MCF 10A (cell line): ENCODE measurements at regions of chr1 and their contacts with region 1.

Region 1: DNA sequence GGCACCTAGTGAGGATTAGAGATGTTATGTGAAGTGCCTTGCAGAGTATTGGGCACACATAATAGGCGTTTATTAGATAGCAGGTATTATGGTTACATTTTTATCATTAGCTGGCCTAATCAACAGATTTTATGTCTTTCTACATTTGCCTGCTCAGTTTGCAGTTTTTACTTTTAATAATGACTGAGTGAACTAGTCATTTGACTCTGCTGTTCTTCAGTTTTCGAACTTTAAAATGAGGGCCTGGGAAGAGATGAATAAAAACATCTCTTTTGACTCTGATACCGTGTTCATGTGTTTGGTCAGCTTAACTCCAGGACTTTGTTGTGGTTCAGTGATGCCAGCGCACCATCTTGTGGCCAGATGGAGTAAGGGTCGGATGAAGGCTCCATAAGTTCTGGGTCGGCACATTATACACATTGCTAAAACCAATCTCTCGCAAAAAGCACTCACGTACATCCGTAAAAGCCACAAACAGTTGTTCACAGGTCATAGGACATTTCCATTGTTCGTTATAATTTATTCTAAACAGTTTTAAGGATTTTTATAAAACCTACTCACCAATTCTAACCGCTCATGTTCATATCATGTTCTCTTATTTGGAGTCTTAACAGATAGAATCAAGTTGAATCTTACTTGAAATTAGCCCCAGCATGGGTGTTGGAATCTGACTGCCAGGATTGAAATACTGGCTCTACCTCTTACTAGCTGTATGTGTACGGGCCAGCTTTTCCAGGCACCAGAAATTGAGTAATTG is 78.4 kb upstream of the GPR88 start:
- DNase-seq: peak; percentile 83
- H3K4me3 Mint-ChIP-seq: no peak overlapping the region
- H3K27ac Mint-ChIP-seq: no peak overlapping the region
- H3K4me1 Mint-ChIP-seq: peaks cover 7% of the 10 kb centered on the region
- H3K27me3 Mint-ChIP-seq: no peaks in the 10 kb centered on the region
- CTCF ChIP-seq: peak; percentile 75

Region 2: DNA sequence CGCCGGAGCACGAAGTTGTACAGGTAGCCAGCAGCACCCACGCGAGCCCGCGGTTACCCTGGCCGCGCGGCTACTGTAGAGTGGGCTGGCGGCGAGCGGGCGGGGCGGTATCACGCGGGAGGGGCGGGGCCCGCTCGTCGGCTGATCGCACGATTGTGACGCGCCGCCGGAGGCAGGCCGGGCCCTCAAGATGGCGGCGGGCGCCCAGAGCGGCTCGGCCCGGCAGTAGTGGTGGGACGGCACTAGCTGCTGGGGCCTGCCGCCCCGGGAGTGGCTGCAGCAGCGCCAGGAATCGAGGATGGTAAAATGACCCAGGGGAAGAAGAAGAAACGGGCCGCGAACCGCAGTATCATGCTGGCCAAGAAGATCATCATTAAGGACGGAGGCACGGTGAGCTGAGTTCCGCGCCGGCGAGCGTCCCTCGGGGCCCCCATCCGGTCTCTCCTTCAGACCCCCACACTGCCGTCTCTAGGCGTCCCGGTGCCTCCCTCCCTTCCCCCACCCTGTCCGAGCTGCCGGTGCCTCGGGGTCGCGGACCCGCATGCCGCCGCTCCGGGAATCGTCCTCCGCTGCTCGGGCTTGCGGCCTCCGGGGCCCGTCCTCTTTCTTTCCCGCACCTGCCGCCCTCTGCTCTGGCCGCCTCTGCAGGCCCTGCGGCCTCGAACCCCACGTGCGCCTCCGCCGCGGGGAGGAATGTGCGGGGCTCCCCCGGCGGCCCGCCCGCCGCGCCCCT is 421.4 kb before region 1 on chr1:
- CTCF ChIA-PET with region 1: interaction called, 4 read pairs
- POLR2A ChIA-PET with region 1: no interaction called
- intact Hi-C with region 1: loop called (anchors 5 kb)
- DNase-seq: peak; percentile 84
- H3K4me3 Mint-ChIP-seq: peak overlapping the region; percentile 90
- H3K27ac Mint-ChIP-seq: peak overlapping the region; percentile 97
- H3K4me1 Mint-ChIP-seq: peaks cover 18% of the 10 kb centered on the region
- H3K27me3 Mint-ChIP-seq: no peaks in the 10 kb centered on the region
- CTCF ChIP-seq: no peak

Region 3: GRCh38 chr1:100277866-100278265 is 181.7 kb before region 1 on chr1:
- CTCF ChIA-PET with region 1: interaction called, 7 read pairs
- POLR2A ChIA-PET with region 1: interaction called, 3 read pairs
- intact Hi-C with region 1: loop called (anchors 5 kb)
- DNase-seq: peak; percentile 38
- H3K4me3 Mint-ChIP-seq: no peak overlapping the region
- H3K27ac Mint-ChIP-seq: no peak overlapping the region
- H3K4me1 Mint-ChIP-seq: peaks cover 4% of the 10 kb centered on the region
- H3K27me3 Mint-ChIP-seq: no peaks in the 10 kb centered on the region
- CTCF ChIP-seq: no peak

Region 4: GRCh38 chr1:100443811-100444571 is 15.5 kb before region 1 on chr1:
- CTCF ChIA-PET with region 1: interaction called, 27 read pairs
- POLR2A ChIA-PET with region 1: interaction called, 3 read pairs
- intact Hi-C with region 1: no loop called
- DNase-seq: no peak
- H3K4me3 Mint-ChIP-seq: no peak overlapping the region
- H3K27ac Mint-ChIP-seq: no peak overlapping the region
- H3K4me1 Mint-ChIP-seq: no peaks in the 10 kb centered on the region
- H3K27me3 Mint-ChIP-seq: no peaks in the 10 kb centered on the region
- CTCF ChIP-seq: no peak

Region 5: DNA sequence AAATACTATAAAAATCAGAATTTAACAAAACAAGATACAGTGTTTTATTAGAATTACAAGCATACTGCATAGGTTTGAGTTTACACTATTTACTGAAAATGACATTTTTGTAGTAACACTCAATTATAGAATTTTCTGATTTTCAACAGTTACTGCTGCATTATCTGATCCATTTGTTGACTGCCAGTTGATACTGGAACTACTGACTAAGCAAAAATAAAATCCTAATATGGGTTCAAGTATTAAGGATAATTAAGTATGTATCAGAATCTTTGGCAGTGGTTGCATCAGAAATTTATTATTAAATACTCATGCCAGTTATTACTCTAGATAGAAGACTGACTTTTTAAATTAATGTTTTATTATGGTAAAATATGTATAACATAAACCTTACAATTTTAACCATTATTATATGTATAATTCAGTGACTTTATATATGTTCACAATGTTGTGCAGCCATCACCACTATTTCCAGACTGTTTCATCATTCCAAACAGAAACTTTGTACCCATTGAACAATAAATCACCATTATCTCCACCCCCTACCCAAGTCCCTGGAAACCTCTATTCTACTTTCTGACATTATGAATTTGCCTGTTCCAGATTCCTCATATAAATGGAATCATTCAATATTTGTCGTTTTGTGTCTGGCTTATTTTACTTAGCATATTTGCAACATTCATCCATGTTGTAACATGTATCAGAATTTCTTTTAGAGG is 20.2 kb after region 1 on chr1:
- CTCF ChIA-PET with region 1: interaction called, 15 read pairs
- POLR2A ChIA-PET with region 1: no interaction called
- intact Hi-C with region 1: no loop called
- DNase-seq: no peak
- H3K4me3 Mint-ChIP-seq: no peak overlapping the region
- H3K27ac Mint-ChIP-seq: no peak overlapping the region
- H3K4me1 Mint-ChIP-seq: no peaks in the 10 kb centered on the region
- H3K27me3 Mint-ChIP-seq: no peaks in the 10 kb centered on the region
- CTCF ChIP-seq: no peak

Region 6: DNA sequence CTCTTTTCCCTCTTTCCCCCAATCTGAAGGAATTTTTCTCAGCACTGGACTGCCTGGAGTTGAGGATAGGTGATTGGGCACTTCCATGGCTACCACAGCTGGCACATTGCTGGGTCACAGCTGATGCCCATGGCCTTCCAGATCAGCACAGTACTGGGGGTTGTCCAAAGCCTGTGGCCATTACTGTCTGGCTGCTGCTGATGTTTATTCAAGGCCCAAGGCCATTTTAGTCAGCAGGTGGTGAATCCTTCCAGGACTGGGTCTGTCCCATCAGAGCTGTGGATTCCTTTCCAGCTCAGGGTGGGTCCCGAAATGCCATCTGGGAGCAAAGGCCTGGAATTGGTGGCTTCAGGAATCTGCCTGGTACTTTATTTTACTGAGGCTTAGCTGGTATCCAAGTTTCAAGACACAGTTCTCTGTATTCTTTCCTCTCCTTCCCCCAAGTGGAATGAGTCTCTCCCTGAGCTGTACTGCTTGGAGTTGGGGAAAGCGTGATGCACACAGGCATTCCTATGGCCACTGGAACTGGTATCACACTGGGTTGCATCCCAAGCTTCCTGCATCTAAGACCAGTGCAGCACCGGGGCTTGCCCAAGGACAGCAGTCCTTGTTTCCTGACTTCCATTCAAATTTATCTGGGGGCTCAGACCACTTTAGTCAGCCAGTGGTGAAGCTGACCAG is 97.5 kb after region 1 on chr1:
- CTCF ChIA-PET with region 1: no interaction called
- POLR2A ChIA-PET with region 1: no interaction called
- intact Hi-C with region 1: no loop called
- DNase-seq: no peak
- H3K4me3 Mint-ChIP-seq: no peak overlapping the region
- H3K27ac Mint-ChIP-seq: no peak overlapping the region
- H3K4me1 Mint-ChIP-seq: no peaks in the 10 kb centered on the region
- H3K27me3 Mint-ChIP-seq: no peaks in the 10 kb centered on the region
- CTCF ChIP-seq: no peak

Region 7: GRCh38 chr1:100866041-100866900 is 406.7 kb after region 1 on chr1:
- CTCF ChIA-PET with region 1: interaction called, 310 read pairs
- POLR2A ChIA-PET with region 1: interaction called, 7 read pairs
- intact Hi-C with region 1: loop called (anchors 1 kb)
- DNase-seq: peak; percentile 55
- H3K4me3 Mint-ChIP-seq: no peak overlapping the region
- H3K27ac Mint-ChIP-seq: no peak overlapping the region
- H3K4me1 Mint-ChIP-seq: no peaks in the 10 kb centered on the region
- H3K27me3 Mint-ChIP-seq: no peaks in the 10 kb centered on the region
- CTCF ChIP-seq: peak; percentile 54